Psoas muscle (tissue), 8 donors: ENCODE measurements at regions of chr22 and their contacts with region 1.

Region 1: DNA sequence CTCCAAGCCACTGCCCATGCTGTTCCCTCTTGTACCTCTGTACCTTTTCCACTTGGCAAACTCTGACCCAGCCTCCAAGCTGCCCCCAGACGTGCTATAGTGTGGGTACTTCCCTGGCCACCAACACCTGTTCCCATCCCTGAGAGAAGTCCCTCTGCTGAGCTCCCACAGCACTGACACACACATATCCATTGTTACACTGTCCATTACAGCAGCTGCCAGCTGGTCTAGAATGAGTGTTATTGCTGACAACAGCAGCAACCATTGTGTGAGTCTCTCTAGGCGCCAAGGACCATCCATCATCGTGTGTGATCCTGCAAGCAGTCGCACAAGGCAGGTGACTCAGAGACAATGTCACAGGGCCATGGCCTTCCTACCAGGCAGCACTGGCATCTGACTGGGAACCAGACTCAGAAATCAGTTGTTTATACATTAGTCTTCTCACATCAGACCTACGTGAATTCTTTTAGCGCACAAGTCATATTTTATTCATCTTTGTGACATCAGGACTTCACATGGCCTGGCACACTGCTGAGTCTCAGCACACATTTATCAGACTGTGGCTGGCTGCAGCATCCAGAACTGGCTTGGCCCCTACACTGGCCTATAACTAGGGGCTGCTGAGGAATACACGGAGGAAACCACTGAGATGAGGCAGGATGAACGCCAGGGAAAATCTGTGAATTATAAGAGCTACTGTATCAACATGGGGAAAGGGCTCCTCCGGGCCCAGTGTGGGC is 56.4 kb downstream of the SGSM3 start:
- DNase-seq: peak; percentile 71 to 76
- ATAC-seq: peak; percentile 79 to 90 (median 88)
- H3K4me3 ChIP-seq: no peak overlapping the region
- H3K27ac ChIP-seq: peak overlapping the region; percentile 82
- H3K4me1 ChIP-seq: peaks cover 59% of the 10 kb centered on the region
- H3K27me3 ChIP-seq: no peaks in the 10 kb centered on the region
- CTCF ChIP-seq: no peak

Region 2: DNA sequence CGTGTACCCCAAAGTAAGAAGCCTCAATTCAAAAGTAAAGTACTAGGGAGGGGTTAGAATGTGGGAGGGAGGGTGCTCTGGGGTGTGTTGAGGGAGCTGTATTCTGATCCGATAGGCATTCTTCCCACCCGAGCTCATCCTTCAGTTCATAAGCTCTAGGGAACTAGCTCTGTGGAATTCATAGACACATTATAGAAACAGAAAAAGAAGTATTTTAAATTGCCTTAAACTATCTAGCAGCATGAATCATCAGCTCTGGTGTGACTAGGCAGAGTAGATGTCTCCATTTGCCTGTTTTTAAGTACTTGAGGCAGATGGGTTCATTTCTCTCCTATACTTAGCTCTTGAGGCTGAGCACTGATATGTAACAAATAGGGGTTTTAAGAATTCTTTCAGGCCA is 63.7 kb before region 1 on chr22:
- intact Hi-C with region 1: no loop called
- DNase-seq: no peak
- ATAC-seq: no peak
- H3K4me3 ChIP-seq: no peak overlapping the region
- H3K27ac ChIP-seq: no peak overlapping the region
- H3K4me1 ChIP-seq: peaks cover 13% of the 10 kb centered on the region
- H3K27me3 ChIP-seq: no peaks in the 10 kb centered on the region
- CTCF ChIP-seq: no peak

Region 3: DNA sequence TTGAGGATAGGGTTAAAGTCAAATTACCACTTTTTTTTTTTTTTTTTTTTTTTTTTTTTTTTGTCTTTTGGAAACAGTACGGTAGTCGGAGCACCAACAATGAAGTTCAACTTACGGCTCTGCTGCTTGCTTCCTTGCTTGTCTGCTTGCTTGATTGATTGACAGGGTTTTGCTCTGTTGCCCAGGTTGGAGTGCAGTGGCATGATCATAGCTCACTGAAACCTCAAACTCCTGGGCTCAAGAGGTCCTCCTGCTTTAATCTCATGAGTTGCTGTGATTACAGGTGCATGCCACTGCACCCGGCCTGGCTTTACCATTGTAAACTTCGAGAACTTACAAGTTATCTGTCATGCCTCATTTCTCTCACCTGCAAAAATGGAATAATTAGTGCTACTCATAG is 50.6 kb before region 1 on chr22:
- intact Hi-C with region 1: loop called in 1 of 2 experiments (anchors 5 kb)
- DNase-seq: no peak
- ATAC-seq: peak; percentile 38 to 75 (median 68)
- H3K4me3 ChIP-seq: no peak overlapping the region
- H3K27ac ChIP-seq: no peak overlapping the region
- H3K4me1 ChIP-seq: peaks cover 30% of the 10 kb centered on the region
- H3K27me3 ChIP-seq: no peaks in the 10 kb centered on the region
- CTCF ChIP-seq: no peak

Region 4: GRCh38 chr22:40684728-40685127 is 258.0 kb after region 1 on chr22:
- intact Hi-C with region 1: no loop called
- DNase-seq: no peak
- ATAC-seq: no peak
- H3K4me3 ChIP-seq: no peak overlapping the region
- H3K27ac ChIP-seq: no peak overlapping the region
- H3K4me1 ChIP-seq: no peaks in the 10 kb centered on the region
- H3K27me3 ChIP-seq: peaks cover 0 to 6% (median under 1%) of the 10 kb centered on the region in 3 donors
- CTCF ChIP-seq: no peak